Right cardiac atrium (tissue), 5 donors: ENCODE measurements at regions of chr5 and their contacts with region 1.

Region 1: DNA sequence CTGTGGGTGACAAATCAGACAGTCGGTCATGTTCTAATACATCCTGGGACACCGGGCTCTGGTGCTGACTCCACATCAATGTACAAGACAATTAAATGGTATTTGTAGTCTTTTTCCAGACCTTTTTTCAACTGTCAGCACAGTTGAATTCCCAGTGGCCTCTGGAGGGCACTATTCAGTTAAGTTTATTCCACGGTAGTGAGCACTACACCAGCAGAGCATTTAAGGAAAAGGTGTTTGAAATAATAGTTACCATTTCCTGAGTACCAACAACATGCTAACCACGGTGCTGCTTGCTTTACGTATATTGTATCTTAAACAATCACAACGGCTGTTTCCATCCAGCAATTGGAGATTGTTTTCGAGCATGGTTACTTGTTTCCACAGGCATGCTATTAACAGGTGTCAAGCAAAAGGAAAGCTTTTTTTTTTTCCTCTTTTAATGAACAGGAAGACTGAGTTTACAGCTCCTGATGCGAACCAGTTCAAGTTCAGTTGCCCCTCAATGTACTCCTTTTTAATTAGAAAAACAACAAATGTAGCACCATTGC is 186.7 kb downstream of the PDZD2 start:
- DNase-seq: no peak
- ATAC-seq: peak; percentile 81 to 87
- H3K4me3 ChIP-seq: no peak overlapping the region
- H3K27ac ChIP-seq: no peak overlapping the region
- H3K4me1 ChIP-seq: no peaks in the 10 kb centered on the region
- H3K27me3 ChIP-seq: no peaks in the 10 kb centered on the region

Region 2: DNA sequence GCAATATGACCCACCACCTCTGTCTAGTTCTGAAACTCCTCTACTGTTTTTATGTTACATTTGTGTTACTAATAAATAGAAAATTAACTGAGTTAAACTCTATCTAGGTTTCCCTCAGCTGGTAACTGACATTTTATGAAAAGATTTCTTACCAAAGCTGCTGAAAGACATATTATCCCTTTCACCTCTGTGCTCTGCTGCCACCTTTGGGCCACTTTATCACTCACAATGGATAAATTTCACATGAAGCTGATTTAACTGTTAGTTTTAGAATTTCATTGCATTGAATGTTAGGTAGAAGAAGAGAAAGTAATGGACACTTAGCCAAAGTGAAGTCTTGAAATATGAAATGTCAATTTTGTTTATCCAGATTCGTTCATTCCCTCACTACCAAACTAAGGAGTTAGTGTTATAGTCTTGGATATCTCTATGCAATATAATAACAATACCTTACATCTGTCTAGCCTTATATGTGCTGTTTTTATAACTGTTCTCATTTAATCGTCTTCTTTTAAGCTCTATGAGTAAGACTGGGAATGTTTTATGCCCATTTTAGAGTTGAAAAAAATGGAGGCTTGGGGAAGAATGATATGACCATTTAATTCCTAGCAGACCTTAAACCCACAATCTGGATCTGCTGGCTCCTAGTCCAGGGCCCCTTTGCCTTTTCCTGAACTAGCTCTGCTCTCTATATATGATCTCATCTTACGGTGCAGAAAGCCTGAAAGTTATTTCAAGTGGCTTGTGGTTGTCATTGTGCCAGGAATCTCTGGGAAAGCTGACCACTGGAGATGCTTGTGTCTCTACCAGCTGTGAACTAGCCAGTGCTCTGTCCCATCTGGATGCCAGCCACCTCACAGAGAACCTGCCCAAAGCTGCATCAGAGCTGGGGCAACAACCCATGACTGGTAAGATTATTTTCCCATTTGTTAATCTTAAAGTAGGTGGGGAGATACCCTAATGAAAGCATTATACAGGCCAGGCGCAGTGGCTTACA is 251.4 kb after region 1 on chr5:
- intact Hi-C with region 1: loop called (anchors 5 to 10 kb)
- DNase-seq: peak in 2 of 3 donors; percentile 45 to 69
- ATAC-seq: peak; percentile 70 to 76
- H3K4me3 ChIP-seq: no peak overlapping the region
- H3K27ac ChIP-seq: no peak overlapping the region
- H3K4me1 ChIP-seq: no peaks in the 10 kb centered on the region
- H3K27me3 ChIP-seq: no peaks in the 10 kb centered on the region

Region 3: DNA sequence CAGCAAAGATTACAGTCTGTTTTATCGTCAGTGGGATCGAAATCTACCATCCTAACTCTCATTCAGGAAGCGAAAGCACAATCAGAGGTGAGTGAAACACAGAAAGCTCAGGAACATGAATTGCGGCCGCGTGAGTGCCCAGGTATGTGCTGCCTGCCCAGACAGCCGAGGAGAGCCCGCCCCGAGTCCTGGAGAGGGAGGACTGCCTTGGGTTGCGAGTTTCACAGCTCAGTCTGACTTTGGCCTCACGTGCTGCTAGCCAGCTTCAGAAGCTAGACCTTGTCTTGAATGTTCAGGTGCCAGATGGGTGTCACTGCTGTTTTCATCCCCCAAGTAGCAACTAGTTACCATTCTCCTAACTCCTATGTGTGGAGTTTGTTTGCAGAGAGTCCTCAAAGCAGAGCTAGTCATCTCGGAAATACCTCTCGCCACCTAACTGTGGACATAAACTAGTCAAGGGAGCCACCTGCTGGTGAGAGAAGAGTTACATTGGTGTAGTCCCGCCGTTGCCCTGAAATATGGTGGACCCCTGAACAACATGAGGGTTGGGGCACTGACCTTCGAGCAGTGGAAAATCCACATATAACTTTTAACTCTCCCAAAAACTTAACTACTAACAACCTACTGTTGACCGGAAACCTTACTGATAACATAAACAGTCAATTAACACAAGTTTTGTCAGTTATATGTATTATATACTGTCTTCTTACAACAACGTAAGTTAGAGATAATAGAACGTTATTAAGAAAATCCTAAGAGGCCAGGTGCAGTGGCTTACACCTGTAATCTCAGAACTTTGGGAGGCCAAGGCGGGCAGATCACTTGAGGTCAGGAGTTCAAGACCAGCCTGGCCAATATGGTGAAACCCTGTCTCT is 267.6 kb after region 1 on chr5:
- intact Hi-C with region 1: loop called in 1 of 4 experiments (anchors 5 kb)
- DNase-seq: peak in 2 of 3 donors; percentile 53 to 63
- ATAC-seq: peak; percentile 76 to 77
- H3K4me3 ChIP-seq: no peak overlapping the region
- H3K27ac ChIP-seq: no peak overlapping the region
- H3K4me1 ChIP-seq: peaks cover 8% of the 10 kb centered on the region
- H3K27me3 ChIP-seq: no peaks in the 10 kb centered on the region